Heart left ventricle (tissue), 16 donors: ENCODE measurements at regions of chr5 and their contacts with region 1.

Region 1: DNA sequence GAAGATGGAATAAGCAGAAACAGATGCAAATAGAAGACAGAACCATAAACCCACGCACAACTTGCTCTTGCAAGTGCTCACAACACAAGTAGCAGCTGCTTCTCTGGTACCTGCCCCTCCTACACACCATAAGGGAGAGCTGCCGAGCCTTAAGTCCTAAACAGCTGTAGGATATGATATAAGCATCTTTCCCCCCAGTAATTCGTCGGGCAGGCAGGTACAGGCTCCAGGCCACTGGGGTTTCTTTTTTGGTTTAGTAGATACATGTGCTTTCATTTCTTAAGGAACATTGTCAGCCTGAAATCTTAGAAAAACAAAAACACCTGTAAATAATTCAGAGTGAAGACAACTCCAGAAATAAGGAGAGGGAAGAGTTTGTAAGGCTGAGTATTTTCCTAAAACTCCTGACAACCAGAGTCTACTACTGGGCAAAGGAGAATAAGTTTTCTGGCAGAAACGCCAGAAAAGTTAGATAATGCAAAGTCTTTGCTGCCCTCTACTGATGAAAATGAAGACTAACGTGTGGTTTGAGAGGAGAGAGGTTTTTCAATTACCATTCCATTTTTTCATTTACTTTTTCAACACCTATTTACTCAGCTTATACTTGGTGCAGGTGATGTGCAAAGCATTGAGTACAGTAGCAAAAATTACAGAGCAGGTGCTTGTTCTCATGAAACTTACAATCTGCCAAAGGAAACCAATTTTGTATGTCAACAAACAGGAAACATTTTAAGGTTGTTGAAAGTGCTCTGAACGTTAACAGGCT is 20.1 kb upstream of the TCERG1 start:
- DNase-seq: no peak
- ATAC-seq: peak in 3 of 4 donors; percentile 45 to 71 (median 68)
- H3K4me3 ChIP-seq: no peak overlapping the region
- H3K27ac ChIP-seq: no peak overlapping the region
- H3K4me1 ChIP-seq: no peaks in the 10 kb centered on the region
- H3K27me3 ChIP-seq: peaks cover 0 to 9% (median 0%) of the 10 kb centered on the region in 9 donors
- CTCF ChIP-seq: peak; percentile 41 to 75 (median 66)
- POLR2A ChIP-seq: no peak

Region 2: DNA sequence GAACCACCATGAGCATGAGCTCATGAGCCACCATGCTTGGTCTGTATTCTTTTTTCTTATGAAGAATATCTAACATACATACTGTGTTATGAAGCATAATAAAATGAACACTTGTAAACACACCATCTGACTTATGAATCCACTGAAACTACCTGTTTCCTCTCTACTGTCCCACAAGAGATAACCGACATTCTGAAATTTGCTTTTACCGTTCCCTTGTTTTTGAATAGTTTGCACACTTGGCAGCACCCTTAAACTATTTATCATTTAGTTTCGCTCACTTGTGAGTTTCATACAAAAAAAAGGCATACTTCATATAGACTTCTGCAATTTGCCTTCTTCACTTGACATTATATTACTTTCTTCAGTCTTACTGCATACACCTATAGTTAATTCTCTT is 253.4 kb before region 1 on chr5:
- intact Hi-C with region 1: loop called in 1 of 10 experiments (anchors 10 kb)
- DNase-seq: no peak
- ATAC-seq: no peak
- H3K4me3 ChIP-seq: no peak overlapping the region
- H3K27ac ChIP-seq: no peak overlapping the region
- H3K4me1 ChIP-seq: no peaks in the 10 kb centered on the region
- H3K27me3 ChIP-seq: no peaks in the 10 kb centered on the region
- CTCF ChIP-seq: no peak
- POLR2A ChIP-seq: no peak

Region 3: DNA sequence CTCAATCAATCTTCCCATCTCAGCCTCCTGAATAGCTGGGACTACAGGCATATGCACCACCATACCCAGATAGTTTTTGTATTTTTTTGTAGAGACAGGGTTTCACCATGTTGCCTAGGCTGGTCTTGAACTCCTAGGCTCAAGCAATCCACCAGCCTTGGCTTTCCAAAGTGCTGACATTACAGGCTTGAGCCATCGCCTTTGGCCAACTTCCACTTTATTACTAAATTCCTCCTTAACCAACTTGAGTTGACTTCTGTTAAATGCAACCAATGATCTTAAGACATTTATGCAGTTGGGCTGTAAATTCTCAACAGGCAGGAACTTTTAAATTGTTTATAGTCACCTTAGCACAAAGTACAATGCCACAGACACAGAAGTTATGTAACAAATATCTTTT is 247.3 kb before region 1 on chr5:
- intact Hi-C with region 1: loop called in 3 of 10 experiments (anchors 5 to 10 kb)
- DNase-seq: no peak
- ATAC-seq: no peak
- H3K4me3 ChIP-seq: no peak overlapping the region
- H3K27ac ChIP-seq: no peak overlapping the region
- H3K4me1 ChIP-seq: peaks cover 0 to 24% (median 8%) of the 10 kb centered on the region in 12 donors
- H3K27me3 ChIP-seq: no peaks in the 10 kb centered on the region
- CTCF ChIP-seq: no peak
- POLR2A ChIP-seq: no peak

Region 4: DNA sequence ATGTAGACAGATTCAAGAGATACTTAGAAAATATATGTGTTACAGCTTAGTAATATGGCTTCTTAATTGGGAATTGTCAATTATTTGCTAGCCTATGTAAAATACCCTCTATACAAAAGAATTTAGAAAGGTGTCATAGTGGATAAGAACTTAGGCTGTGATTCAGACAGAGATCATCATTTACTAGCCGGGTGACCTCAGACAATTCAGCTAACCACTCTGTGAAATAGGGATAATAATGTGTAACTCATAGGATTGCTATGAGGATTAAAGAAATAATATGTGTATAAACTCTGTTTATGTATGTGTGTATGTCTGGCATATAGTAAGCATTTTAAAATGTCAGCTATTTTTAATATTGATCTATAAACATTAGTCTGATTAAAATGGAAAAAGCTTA is 238.7 kb before region 1 on chr5:
- intact Hi-C with region 1: loop called in 2 of 10 experiments (anchors 5 to 10 kb)
- DNase-seq: no peak
- ATAC-seq: no peak
- H3K4me3 ChIP-seq: no peak overlapping the region
- H3K27ac ChIP-seq: no peak overlapping the region
- H3K4me1 ChIP-seq: peaks cover 0 to 2% (median 0%) of the 10 kb centered on the region in 12 donors
- H3K27me3 ChIP-seq: no peaks in the 10 kb centered on the region
- CTCF ChIP-seq: no peak
- POLR2A ChIP-seq: no peak

Region 5: DNA sequence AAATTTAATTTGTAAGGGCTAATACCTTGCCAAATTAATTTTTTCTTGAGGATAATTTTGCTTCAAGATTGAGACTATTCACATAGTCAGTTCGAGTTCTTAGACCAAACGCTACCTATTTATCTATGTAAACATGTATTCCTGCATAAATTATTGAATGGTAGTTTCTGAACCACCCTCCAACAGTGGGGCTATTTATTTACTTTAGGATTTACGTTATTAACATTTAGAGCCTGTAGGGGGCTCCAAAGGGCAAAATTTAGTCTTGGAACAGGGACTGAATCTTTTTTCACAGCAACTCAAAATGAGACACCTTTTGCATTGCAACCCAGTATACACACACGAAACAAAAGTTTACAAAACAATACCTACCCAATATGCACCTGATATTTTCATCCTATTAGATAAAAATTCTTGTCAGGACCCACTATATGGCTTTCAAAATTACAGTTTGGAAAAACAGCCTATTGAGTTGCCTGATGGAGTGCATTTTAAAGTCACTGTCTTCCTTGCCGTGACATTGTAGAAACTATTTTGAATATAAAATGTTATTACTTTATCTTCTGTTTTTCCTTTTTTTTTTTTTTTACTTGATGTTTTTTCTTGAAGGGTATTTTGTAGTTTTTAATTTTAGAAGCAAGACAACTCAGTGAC is 135.5 kb before region 1 on chr5:
- intact Hi-C with region 1: loop called (anchors 1 to 5 kb)
- DNase-seq: no peak
- ATAC-seq: peak in 3 of 4 donors; percentile 49 to 68 (median 57)
- H3K4me3 ChIP-seq: no peak overlapping the region
- H3K27ac ChIP-seq: no peak overlapping the region
- H3K4me1 ChIP-seq: peaks cover 0 to 6% (median 0%) of the 10 kb centered on the region in 12 donors
- H3K27me3 ChIP-seq: no peaks in the 10 kb centered on the region
- CTCF ChIP-seq: peak; percentile 37 to 71 (median 57)
- POLR2A ChIP-seq: no peak

Region 6: GRCh38 chr5:146340260-146341081 is 86.6 kb before region 1 on chr5:
- intact Hi-C with region 1: no loop called
- DNase-seq: peak in 4 of 5 donors; percentile 55 to 66 (median 62)
- ATAC-seq: peak in 3 of 4 donors; percentile 52 to 75 (median 53)
- H3K4me3 ChIP-seq: peak overlapping the region in 2 of 12 donors; percentile 3 to 10
- H3K27ac ChIP-seq: no peak overlapping the region
- H3K4me1 ChIP-seq: peaks cover 0 to 34% (median 9%) of the 10 kb centered on the region in 12 donors
- H3K27me3 ChIP-seq: peaks cover 43 to 98% (median 96%) of the 10 kb centered on the region in 9 donors
- CTCF ChIP-seq: no peak
- POLR2A ChIP-seq: no peak

Region 7: GRCh38 chr5:146446853-146447733 is 20.1 kb after region 1 on chr5 and contains the start of gene TCERG1:
- intact Hi-C with region 1: no loop called
- DNase-seq: peak; percentile 99 to 100 (median 99)
- ATAC-seq: peak; percentile 96 to 99 (median 98)
- H3K4me3 ChIP-seq: peak within 1 kb of the TSS; percentile 75 to 100 (median 97)
- H3K27ac ChIP-seq: peak within 1 kb of the TSS; percentile 43 to 93 (median 88)
- H3K4me1 ChIP-seq: peaks cover 0 to 39% (median 29%) of the 10 kb centered on the region in 12 donors
- H3K27me3 ChIP-seq: no peaks in the 10 kb centered on the region
- CTCF ChIP-seq: peak; percentile 66 to 97 (median 80)
- POLR2A ChIP-seq: peak in 1 of 2 donors; percentile 27
- total RNA-seq, gene TCERG1: 17.6 to 28.7 (median 21.6) TPM